A549 (cell line): ENCODE measurements at regions of chr7 and their contacts with region 1.

Region 1: GRCh38 chr7:93430917-93431588 is 143.5 kb downstream of the CALCR start:
- DNase-seq: no peak
- ATAC-seq: no peak
- H3K4me3 ChIP-seq: no peak overlapping the region
- H3K27ac ChIP-seq: no peak overlapping the region
- H3K4me1 ChIP-seq: no peaks in the 10 kb centered on the region
- CTCF ChIP-seq: no peak
- EP300 ChIP-seq: no peak
- POLR2A ChIP-seq: no peak
- RAD21 ChIP-seq: no peak

Region 2: DNA sequence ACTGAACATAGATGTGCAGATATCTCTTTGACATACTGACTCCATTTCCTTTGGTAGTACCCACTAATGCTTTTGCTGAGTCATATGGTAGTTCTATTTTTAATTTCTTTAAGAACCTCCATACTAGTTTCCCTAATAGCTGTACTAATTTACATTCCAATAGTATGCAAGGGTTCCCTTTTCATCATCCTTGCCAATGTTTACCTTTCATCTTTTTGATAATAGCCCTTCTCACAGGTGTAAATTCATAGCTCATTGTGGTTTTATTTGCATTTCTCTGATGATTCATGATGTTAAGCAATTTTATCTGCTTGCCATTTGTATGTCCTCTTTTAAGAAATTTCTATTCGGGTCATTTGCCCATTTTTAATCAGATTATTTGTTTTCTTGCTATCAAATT is 16.4 kb before region 1 on chr7:
- CTCF ChIA-PET with region 1: no interaction called
- POLR2A ChIA-PET with region 1: no interaction called
- DNase-seq: no peak
- ATAC-seq: no peak
- H3K4me3 ChIP-seq: no peak overlapping the region
- H3K27ac ChIP-seq: no peak overlapping the region
- H3K4me1 ChIP-seq: no peaks in the 10 kb centered on the region
- CTCF ChIP-seq: no peak
- EP300 ChIP-seq: no peak
- POLR2A ChIP-seq: no peak
- RAD21 ChIP-seq: no peak

Region 3: DNA sequence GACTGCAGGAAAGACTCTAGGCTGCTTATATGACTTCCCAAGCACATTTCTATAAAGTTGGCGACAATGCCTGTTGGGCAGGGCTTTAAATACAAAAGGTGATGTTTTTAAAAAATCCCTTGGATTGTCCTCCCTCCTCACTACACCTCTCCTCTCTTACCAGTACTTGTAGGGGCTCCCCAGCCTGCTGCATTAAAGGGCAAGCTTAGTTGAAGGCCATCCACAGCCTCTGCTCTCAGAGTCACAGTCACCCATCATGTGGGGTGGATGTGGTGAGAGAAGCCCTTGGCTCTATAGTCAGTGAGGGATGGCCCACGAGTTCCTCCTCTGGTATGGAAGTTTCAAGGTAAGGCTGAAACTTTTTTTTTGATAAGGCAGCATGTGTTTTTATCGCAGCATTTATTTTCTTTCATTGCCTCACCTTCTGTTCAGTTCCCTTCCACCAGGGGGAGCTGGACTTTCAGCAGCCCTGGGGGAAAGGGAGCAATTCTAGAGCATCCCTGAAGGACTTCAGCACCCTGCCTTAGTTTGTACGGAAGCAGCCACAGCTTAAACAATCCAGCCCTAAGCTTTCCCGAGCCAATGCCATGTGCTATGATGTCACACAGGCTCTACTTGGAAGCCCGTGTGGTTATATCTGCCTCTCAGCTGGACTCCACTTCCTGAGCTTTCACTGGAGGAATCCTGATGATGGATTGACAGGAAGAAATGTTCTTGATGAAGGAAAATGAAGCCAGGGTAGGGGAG is 11.6 kb after region 1 on chr7:
- CTCF ChIA-PET with region 1: interaction called, 11 read pairs
- POLR2A ChIA-PET with region 1: no interaction called
- DNase-seq: peak; percentile 28 to 51
- ATAC-seq: peak; percentile 65 to 90; a peak in 5 of 6 replicates
- H3K4me3 ChIP-seq: no peak overlapping the region
- H3K27ac ChIP-seq: no peak overlapping the region
- H3K4me1 ChIP-seq: no peaks in the 10 kb centered on the region
- CTCF ChIP-seq: peak; percentile 53
- EP300 ChIP-seq: no peak
- POLR2A ChIP-seq: no peak
- RAD21 ChIP-seq: peak; percentile 30 to 51; a peak in 3 of 5 replicates

Region 4: GRCh38 chr7:93558705-93559614 is 127.9 kb after region 1 on chr7:
- CTCF ChIA-PET with region 1: no interaction called
- POLR2A ChIA-PET with region 1: no interaction called
- DNase-seq: no peak
- ATAC-seq: no peak
- H3K4me3 ChIP-seq: no peak overlapping the region
- H3K27ac ChIP-seq: no peak overlapping the region
- H3K4me1 ChIP-seq: no peaks in the 10 kb centered on the region
- CTCF ChIP-seq: no peak
- EP300 ChIP-seq: no peak
- POLR2A ChIP-seq: no peak
- RAD21 ChIP-seq: no peak